ENCODE measurements at regions of chr6 and their contacts with region 1.

Region 1: GRCh38 chr6:129073051-129073450 is 190.1 kb downstream of the LAMA2 start:
- DNase-seq: no peak
- H3K4me3 ChIP-seq: no peak overlapping the region
- H3K27ac ChIP-seq: no peak overlapping the region
- H3K4me1 ChIP-seq: no peaks in the 10 kb centered on the region
- H3K27me3 ChIP-seq: peaks cover 0 to 6% of the 10 kb centered on the region in 2 experiments
- CTCF ChIP-seq: no peak
- POLR2A ChIP-seq: no peak

Region 2: GRCh38 chr6:128754658-128755256 is 318.3 kb before region 1 on chr6:
- CTCF ChIA-PET with region 1: no interaction called
- POLR2A ChIA-PET with region 1: no interaction called
- dilution Hi-C with region 1: no loop called
- intact Hi-C with region 1: no loop called
- DNase-seq: no peak
- H3K4me3 ChIP-seq: no peak overlapping the region
- H3K27ac ChIP-seq: no peak overlapping the region
- H3K4me1 ChIP-seq: no peaks in the 10 kb centered on the region
- H3K27me3 ChIP-seq: peaks cover 0 to 12% of the 10 kb centered on the region in 2 experiments
- CTCF ChIP-seq: no peak
- POLR2A ChIP-seq: no peak

Region 3: GRCh38 chr6:129059650-129060049 is 13.4 kb before region 1 on chr6:
- CTCF ChIA-PET with region 1: interaction called, 10 read pairs
- POLR2A ChIA-PET with region 1: no interaction called
- dilution Hi-C with region 1: no loop called
- intact Hi-C with region 1: no loop called
- DNase-seq: no peak
- H3K4me3 ChIP-seq: no peak overlapping the region
- H3K27ac ChIP-seq: no peak overlapping the region
- H3K4me1 ChIP-seq: no peaks in the 10 kb centered on the region
- H3K27me3 ChIP-seq: peaks cover 0 to 2% of the 10 kb centered on the region in 2 experiments
- CTCF ChIP-seq: no peak
- POLR2A ChIP-seq: no peak

Measured in endothelial cell of umbilical vein (primary cell).